Right ventricle myocardium superior (tissue), 1 donor: ENCODE measurements at regions of chr16 and their contacts with region 1.

Region 1: DNA sequence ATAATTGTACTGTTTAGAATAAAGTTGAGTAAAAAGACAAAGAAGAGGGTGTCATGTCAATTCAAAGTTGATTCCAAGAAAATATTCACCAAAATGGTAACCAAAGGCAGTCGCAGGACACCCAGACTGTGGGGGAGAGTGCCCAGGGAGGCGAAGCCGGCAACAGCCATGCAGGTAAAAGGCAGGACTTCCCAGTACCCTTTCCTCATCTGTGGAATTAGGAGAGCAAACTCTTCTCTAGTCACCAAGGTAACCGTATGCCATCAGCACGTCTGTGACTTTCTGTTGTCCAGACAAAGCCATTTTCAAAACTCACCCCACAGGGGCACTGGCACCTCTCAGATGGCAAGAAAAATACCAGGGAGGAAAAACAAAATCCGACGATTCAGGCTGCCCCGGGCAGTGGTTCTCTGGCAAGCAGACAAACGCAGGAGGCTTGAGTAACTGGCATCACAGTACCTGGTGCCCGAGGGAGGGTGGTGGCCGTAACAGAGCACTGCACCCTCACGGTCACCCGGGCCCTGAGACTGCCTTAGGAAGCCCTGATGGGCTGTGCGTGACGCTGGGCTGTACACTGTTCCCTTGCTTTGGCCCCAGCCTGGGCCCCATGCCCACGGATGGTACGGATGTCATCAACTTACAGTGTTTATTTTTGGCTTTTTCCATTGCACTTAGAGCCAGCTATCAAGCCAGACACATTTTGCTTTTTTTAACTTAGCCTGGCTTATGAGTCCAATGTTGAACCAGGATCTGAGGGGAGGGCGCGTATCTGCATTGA is 287.4 kb downstream of the FOXL1 start:
- DNase-seq: peak; percentile 91
- ATAC-seq: peak; percentile 96

Region 2: GRCh38 chr16:86984991-86985647 is 119.4 kb after region 1 on chr16:
- intact Hi-C with region 1: loop called (anchors 10 kb)
- DNase-seq: peak; percentile 75
- ATAC-seq: peak; percentile 93

Region 3: DNA sequence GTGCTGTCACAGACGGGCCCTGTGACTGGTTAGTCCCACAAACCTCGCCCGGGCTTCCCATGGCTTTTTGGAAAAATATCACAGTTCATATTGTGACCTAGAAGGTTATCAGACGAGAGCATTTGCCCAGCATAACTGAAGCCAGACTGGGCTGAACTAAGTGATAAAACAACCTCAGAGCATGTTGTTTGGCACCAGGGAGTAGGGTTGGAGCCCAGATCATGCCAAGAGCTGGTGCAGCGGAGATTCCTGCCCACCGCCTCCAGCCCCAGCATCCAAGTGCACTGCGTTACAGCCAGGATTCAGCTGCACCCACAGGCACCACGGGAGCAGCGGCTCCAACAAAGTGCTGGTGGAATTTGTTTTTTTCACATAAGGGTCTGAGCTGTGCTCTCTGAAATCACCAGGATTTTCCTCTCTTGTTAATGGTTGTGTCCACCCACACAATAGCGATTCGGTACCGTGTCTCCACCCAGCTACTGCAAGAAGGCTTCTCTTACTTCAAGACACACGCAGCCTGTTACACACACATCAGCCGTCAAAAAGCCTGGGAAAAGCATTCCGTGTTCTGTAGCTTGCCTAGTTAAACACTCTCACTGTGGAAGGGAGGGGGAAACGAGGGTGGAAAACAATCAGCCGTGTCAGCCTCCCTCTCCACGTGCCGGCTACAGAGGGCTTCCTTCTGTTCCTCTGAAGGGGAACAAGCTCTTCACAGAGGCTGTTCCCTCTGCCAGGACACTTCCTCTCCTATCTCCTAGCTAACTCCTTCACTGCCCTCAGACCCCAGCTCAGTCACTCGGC is 177.7 kb after region 1 on chr16:
- intact Hi-C with region 1: loop called (anchors 10 kb)
- DNase-seq: no peak
- ATAC-seq: peak; percentile 83